ENCODE measurements at regions of chr9 and their contacts with region 1.

Region 1: GRCh38 chr9:114082017-114082762 is 4.1 kb upstream of the AMBP start:
- DNase-seq: peak; percentile 89

Region 2: DNA sequence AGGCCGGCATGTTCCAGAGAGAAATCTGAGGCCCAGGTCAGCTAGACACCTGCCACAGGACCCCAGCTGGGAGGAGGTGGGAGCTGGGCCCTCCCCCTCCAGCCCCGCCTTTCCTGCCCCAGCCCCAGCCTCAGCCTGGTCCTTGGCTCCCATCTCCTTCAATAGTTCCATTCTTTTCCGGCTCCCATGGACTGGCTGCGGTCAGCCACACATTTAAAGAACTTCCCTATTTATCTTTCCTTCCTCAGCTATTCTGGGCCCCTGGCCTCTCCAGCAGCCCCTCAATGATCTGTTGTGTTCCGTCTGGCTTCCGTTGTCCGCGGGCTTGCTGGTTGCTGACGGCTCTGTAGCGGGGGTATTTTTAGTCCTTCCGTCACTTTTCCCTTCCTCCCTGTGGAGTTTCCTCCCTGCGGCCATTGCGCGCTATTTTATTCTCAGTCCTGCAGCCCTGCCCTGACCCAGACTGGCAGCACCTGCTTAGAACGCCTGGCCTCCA is 77.9 kb before region 1 on chr9:
- intact Hi-C with region 1: no loop called
- DNase-seq: peak; percentile 85

Region 3: GRCh38 chr9:114271641-114272081 is 189.5 kb after region 1 on chr9:
- intact Hi-C with region 1: loop called (anchors 5 kb)
- DNase-seq: no peak

Region 4: GRCh38 chr9:114291064-114291474 is 208.9 kb after region 1 on chr9:
- intact Hi-C with region 1: loop called (anchors 5 kb)
- DNase-seq: peak; percentile 81

Region 5: GRCh38 chr9:114417511-114417910 is 335.3 kb after region 1 on chr9:
- intact Hi-C with region 1: no loop called
- DNase-seq: no peak

Measured in cardiac septum (tissue), 1 donor.